ENCODE measurements at regions of chr17 and their contacts with region 1.

Region 1: DNA sequence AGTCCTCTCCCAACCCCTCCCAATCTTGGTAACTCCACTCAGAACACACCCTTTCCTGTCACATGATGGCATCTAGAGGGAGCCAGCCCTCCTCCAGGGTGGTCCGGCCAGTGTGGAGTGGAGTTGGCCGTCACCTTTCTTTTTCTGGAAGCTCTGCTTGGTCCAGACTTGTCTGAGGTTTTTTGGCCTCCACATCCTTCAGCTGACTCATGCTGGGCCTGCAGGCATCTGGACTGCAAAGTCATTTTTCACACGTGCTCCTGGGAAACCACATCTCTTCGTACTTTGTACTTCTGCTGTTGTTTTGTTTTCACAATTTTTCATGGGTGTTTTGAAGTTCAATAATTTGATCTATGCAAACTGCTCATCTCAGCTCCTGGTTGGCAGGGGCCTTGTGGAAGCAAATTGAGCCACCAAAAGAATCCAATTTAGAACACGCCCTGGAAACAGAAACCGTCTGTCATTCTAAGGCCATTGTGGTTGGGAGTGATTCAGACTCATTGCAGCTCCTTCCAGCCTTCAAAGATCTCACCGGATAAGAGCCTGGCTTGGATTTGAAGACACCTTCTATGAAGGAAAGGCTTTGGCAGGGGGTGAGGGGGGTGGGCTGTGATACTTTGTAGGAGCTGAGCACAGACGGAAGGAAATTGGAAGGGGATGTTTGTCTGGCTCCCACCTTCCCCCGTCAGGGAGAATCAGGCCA is 42.4 kb upstream of the NF1 start:
- DNase-seq: peak; percentile 98
- H3K4me3 ChIP-seq: no peak overlapping the region
- H3K27me3 ChIP-seq: no peaks in the 10 kb centered on the region
- CTCF ChIP-seq: 0 out of 2 replicates have a peak, but pooled peaks have one; percentile 12

Region 2: DNA sequence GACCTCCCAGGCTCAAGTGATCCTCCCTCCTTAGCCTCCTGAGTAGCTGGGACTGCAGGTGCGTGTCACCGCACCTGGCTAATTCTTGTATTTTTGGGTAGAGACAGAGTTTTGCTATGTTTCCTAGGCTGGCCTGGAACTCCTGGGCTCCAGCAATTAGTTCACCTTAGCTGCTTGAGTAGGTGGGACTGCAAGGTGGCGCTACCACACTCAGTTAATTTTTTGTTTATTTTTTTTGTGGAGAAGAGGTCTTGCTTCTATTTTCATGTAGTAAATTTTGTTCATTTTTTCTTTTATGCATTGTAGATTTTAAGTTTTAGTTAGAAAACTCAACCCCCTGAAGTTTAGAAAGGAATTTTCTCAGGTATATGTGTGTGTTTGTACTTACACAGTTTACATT is 59.8 kb before region 1 on chr17:
- CTCF ChIA-PET with region 1: no interaction called
- POLR2A ChIA-PET with region 1: no interaction called
- DNase-seq: no peak
- H3K4me3 ChIP-seq: no peak overlapping the region
- H3K27me3 ChIP-seq: no peaks in the 10 kb centered on the region
- CTCF ChIP-seq: no peak

Region 3: DNA sequence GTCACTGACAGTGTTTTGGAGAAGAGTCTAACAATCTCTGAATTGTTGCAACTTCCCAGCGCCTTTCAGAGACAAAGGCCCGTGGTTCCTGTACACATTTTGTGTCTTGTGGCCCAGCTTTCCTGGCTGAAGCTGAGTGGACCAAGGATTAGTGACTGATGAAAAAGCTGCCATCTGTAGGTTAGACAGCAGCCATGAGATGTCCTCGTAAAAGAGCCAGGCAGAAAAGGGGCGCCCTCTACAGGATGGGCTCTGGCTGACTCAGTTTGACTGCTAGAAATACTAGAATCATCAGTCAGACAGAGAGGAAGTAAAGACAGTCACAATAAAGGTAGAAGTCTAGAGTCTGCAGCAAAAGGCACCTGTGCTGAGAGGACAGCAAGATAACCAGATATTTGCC is 16.0 kb after region 1 on chr17:
- CTCF ChIA-PET with region 1: interaction called, 10 read pairs
- POLR2A ChIA-PET with region 1: no interaction called
- DNase-seq: no peak
- H3K4me3 ChIP-seq: no peak overlapping the region
- H3K27me3 ChIP-seq: no peaks in the 10 kb centered on the region
- CTCF ChIP-seq: peak; percentile 29; the same call in 1 of the 2 replicates

Measured in BJ (cell line).